GM12878 (cell line): ENCODE measurements at regions of chr16 and their contacts with region 1.

Region 1: GRCh38 chr16:80526425-80527061 is 14.2 kb upstream of the DYNLRB2 start:
- DNase-seq: no peak
- ATAC-seq: peak; percentile 82
- H3K4me3 ChIP-seq: no peak overlapping the region
- H3K27ac ChIP-seq: no peak overlapping the region
- H3K4me1 ChIP-seq: no peaks in the 10 kb centered on the region
- H3K27me3 ChIP-seq: no peaks in the 10 kb centered on the region
- CTCF ChIP-seq: peak; percentile 77 to 80 (median 79)
- EP300 ChIP-seq: no peak
- POLR2A ChIP-seq: no peak
- RAD21 ChIP-seq: peak; percentile 93

Region 2: GRCh38 chr16:80466024-80466987 is 60.2 kb before region 1 on chr16:
- CTCF ChIA-PET with region 1: interaction called, 13 read pairs
- POLR2A ChIA-PET with region 1: no interaction called
- RAD21 ChIA-PET with region 1: interaction called, 4 read pairs
- SMC1A ChIA-PET with region 1: interaction called, 4 read pairs
- in situ Hi-C with region 1: no loop called
- intact Hi-C with region 1: no loop called
- DNase-seq: peak; percentile 34
- ATAC-seq: peak; percentile 93
- H3K4me3 ChIP-seq: no peak overlapping the region
- H3K27ac ChIP-seq: no peak overlapping the region
- H3K4me1 ChIP-seq: no peaks in the 10 kb centered on the region
- H3K27me3 ChIP-seq: no peaks in the 10 kb centered on the region; a peak in 1 of 4 replicates
- CTCF ChIP-seq: peak; percentile 73 to 82 (median 76)
- EP300 ChIP-seq: no peak
- POLR2A ChIP-seq: no peak
- RAD21 ChIP-seq: peak; percentile 80

Region 3: GRCh38 chr16:80540516-80541272 is 14.2 kb after region 1 on chr16 and contains the start of gene DYNLRB2:
- CTCF ChIA-PET with region 1: interaction called, 16 read pairs
- POLR2A ChIA-PET with region 1: no interaction called
- RAD21 ChIA-PET with region 1: interaction called, 4 read pairs
- SMC1A ChIA-PET with region 1: interaction called, 10 read pairs
- in situ Hi-C with region 1: no loop called
- intact Hi-C with region 1: no loop called
- DNase-seq: peak; percentile 71
- ATAC-seq: peak; percentile 92
- H3K4me3 ChIP-seq: peak within 1 kb of the TSS; percentile 61
- H3K27ac ChIP-seq: peak within 1 kb of the TSS; percentile 39
- H3K4me1 ChIP-seq: no peaks in the 10 kb centered on the region
- H3K27me3 ChIP-seq: no peaks in the 10 kb centered on the region
- CTCF ChIP-seq: no peak
- EP300 ChIP-seq: no peak
- POLR2A ChIP-seq: peak; percentile 82
- RAD21 ChIP-seq: no peak
- polyA plus RNA-seq, gene DYNLRB2: 0.33 to 0.52 TPM

Region 4: GRCh38 chr16:80804056-80804450 is 277.5 kb after region 1 on chr16:
- CTCF ChIA-PET with region 1: interaction called, 15 read pairs
- POLR2A ChIA-PET with region 1: no interaction called
- RAD21 ChIA-PET with region 1: interaction called, 11 read pairs
- SMC1A ChIA-PET with region 1: interaction called, 6 read pairs
- in situ Hi-C with region 1: no loop called
- intact Hi-C with region 1: no loop called
- DNase-seq: no peak
- ATAC-seq: peak; percentile 52
- H3K4me3 ChIP-seq: peak overlapping the region; percentile 69; the same call in 1 of the 2 replicates
- H3K27ac ChIP-seq: no peak overlapping the region
- H3K4me1 ChIP-seq: no peaks in the 10 kb centered on the region
- H3K27me3 ChIP-seq: peaks cover 0 to 2% of the 10 kb centered on the region in 2 experiments; a peak in 1 of 4 replicates
- CTCF ChIP-seq: no peak
- EP300 ChIP-seq: no peak
- POLR2A ChIP-seq: peak; percentile 68
- RAD21 ChIP-seq: no peak

Region 5: GRCh38 chr16:80852261-80852872 is 325.8 kb after region 1 on chr16:
- CTCF ChIA-PET with region 1: interaction called, 35 read pairs
- POLR2A ChIA-PET with region 1: no interaction called
- RAD21 ChIA-PET with region 1: interaction called, 9 read pairs
- SMC1A ChIA-PET with region 1: interaction called, 8 read pairs
- in situ Hi-C with region 1: loop called (anchors 25 kb)
- intact Hi-C with region 1: no loop called
- DNase-seq: no peak
- ATAC-seq: peak; percentile 52
- H3K4me3 ChIP-seq: no peak overlapping the region
- H3K27ac ChIP-seq: no peak overlapping the region
- H3K4me1 ChIP-seq: no peaks in the 10 kb centered on the region
- H3K27me3 ChIP-seq: no peaks in the 10 kb centered on the region
- CTCF ChIP-seq: peak; percentile 33 to 62 (median 43)
- EP300 ChIP-seq: no peak
- POLR2A ChIP-seq: no peak
- RAD21 ChIP-seq: peak; percentile 72

Region 6: DNA sequence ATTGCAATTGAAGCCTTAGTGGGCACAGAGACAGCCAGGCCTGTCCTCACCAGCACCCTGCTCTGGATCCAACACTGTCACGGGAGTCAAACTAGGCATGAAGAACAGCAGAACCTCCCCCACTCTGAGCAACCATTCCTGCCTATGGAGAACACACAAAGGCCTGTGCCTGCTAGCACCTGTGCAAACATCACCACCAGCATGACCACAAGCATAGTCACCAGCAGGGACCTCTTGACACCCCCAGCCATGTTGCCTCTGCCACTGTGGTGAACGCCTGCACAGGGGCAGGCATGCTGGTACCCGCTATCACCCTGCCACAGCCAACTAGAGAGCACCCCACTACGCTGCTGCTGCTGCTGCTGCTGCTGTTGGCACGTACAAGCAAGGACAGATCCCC is 428.4 kb after region 1 on chr16:
- CTCF ChIA-PET with region 1: no interaction called
- POLR2A ChIA-PET with region 1: no interaction called
- RAD21 ChIA-PET with region 1: no interaction called
- SMC1A ChIA-PET with region 1: no interaction called
- in situ Hi-C with region 1: no loop called
- intact Hi-C with region 1: no loop called
- DNase-seq: no peak
- ATAC-seq: no peak
- H3K4me3 ChIP-seq: no peak overlapping the region
- H3K27ac ChIP-seq: no peak overlapping the region
- H3K4me1 ChIP-seq: no peaks in the 10 kb centered on the region
- H3K27me3 ChIP-seq: no peaks in the 10 kb centered on the region
- CTCF ChIP-seq: no peak
- EP300 ChIP-seq: no peak
- POLR2A ChIP-seq: no peak
- RAD21 ChIP-seq: no peak